ENCODE measurements at regions of chr4 and their contacts with region 1.

Region 1: DNA sequence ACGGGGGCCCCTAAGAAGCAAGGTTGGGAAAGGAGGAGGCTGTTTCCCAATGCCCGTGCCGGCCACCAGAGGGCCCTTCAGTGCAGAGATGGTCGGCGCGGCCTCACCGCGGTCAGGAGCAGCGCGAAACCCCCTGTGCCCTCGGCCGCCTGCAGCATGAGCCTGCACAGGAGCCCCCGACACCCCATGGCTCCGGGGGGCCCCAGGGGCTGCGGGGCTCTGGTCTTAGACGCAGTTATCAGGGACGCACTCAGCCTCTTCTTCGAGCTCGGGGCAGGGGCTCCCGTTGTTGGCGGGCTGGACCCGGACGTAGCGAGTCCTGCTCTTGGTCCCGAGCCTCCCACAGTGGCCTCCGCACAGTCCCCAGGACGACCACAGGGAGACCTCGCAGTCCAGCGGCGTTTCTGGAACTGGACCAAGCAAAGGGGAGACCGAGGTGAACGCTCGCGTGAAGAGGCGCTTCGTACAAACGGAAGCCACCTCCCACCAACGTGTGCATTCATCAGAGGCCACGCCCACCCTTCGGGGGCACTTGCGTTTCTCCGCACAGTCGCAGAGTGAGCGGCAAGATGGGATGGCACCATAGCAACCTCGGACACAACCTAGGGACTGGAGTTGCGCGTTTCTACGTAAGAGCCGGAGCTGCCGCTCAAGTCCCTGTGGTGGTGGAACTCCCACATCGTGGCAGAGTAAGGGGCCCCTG is 5.0 kb downstream of the SPON2 start:
- DNase-seq: peak; percentile 72
- H3K4me3 ChIP-seq: peak overlapping the region; percentile 17 to 36 (median 32)
- H3K27ac ChIP-seq: no peak overlapping the region
- H3K4me1 ChIP-seq: peaks cover 3% of the 10 kb centered on the region
- H3K27me3 ChIP-seq: peaks cover 23% of the 10 kb centered on the region in 2 experiments
- CTCF ChIP-seq: peak; percentile 90 to 98
- POLR2A ChIP-seq: no peak

Region 2: GRCh38 chr4:1249148-1249730 is 81.8 kb after region 1 on chr4:
- CTCF ChIA-PET with region 1: interaction called, 4 read pairs
- POLR2A ChIA-PET with region 1: no interaction called
- dilution Hi-C with region 1: no loop called
- intact Hi-C with region 1: loop called (anchors 1 kb)
- DNase-seq: peak; percentile 75
- H3K4me3 ChIP-seq: peak overlapping the region; percentile 56 to 63 (median 58)
- H3K27ac ChIP-seq: peak overlapping the region; percentile 77
- H3K4me1 ChIP-seq: peaks cover 18% of the 10 kb centered on the region
- H3K27me3 ChIP-seq: no peaks in the 10 kb centered on the region
- CTCF ChIP-seq: no peak
- POLR2A ChIP-seq: peak; percentile 62

Region 3: GRCh38 chr4:1266881-1267763 is 99.7 kb after region 1 on chr4:
- CTCF ChIA-PET with region 1: interaction called, 52 read pairs
- POLR2A ChIA-PET with region 1: no interaction called
- dilution Hi-C with region 1: no loop called
- intact Hi-C with region 1: loop called (anchors 1 kb)
- DNase-seq: no peak
- H3K4me3 ChIP-seq: no peak overlapping the region
- H3K27ac ChIP-seq: no peak overlapping the region
- H3K4me1 ChIP-seq: no peaks in the 10 kb centered on the region
- H3K27me3 ChIP-seq: no peaks in the 10 kb centered on the region
- CTCF ChIP-seq: no peak
- POLR2A ChIP-seq: no peak

Region 4: GRCh38 chr4:1289207-1290164 is 122.1 kb after region 1 on chr4 and contains the start of gene MAEA:
- CTCF ChIA-PET with region 1: no interaction called
- POLR2A ChIA-PET with region 1: no interaction called
- dilution Hi-C with region 1: no loop called
- intact Hi-C with region 1: loop called (anchors 1 kb)
- DNase-seq: peak; percentile 98
- H3K4me3 ChIP-seq: peak within 1 kb of the TSS; percentile 84 to 87 (median 86)
- H3K27ac ChIP-seq: peak within 1 kb of the TSS; percentile 67
- H3K4me1 ChIP-seq: peaks cover 16% of the 10 kb centered on the region
- H3K27me3 ChIP-seq: no peaks in the 10 kb centered on the region
- CTCF ChIP-seq: no peak
- POLR2A ChIP-seq: peak; percentile 96
- total RNA-seq, gene MAEA: 66.0 and 66.6 TPM in 2 replicates

Region 5: DNA sequence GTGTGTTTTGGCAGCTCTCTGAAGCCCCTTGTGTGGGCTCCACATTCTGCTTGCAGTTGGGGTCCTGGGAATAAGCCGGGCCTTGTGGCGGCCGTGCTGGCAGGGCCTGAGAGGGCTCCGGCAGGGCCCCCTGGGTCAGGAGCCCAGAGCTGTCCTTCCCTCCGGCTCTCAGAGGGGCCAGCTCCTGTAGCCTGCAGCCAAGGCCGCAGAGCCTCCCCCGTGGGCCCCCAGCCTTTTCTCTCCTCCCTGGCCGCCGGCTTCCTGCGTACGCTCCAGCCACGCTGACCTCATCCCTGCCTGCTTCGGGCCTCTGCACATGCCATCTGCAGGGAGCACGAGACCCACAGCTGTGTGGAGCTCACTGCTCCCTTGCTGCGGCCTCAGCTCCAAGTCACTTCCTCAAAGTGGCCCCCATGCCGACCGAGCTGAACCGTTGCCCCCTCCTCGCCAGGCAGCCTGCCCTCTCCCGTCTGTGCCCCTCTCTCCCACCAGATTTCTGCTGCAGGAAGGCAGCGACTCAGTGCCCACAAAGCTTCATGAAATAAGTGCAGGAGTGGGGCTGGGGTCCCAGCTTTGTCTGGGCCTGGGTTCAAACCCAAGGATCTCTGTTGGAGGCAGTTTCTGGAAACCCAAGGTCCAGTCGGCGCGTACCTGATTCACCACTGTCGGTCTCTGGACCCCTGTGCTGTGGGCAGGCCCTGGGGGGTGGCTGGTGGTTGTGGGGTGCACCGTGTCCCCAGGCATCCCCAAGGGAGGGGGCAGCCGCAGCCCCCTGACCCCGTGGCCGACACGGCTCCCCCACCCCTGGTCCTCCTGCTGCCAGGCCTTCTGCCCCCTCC is 295.9 kb after region 1 on chr4:
- CTCF ChIA-PET with region 1: no interaction called
- POLR2A ChIA-PET with region 1: no interaction called
- dilution Hi-C with region 1: no loop called
- intact Hi-C with region 1: no loop called
- DNase-seq: no peak
- H3K4me3 ChIP-seq: no peak overlapping the region
- H3K27ac ChIP-seq: no peak overlapping the region
- H3K4me1 ChIP-seq: no peaks in the 10 kb centered on the region
- H3K27me3 ChIP-seq: peaks cover 7 to 12% of the 10 kb centered on the region in 2 experiments
- CTCF ChIP-seq: no peak
- POLR2A ChIP-seq: no peak

Region 6: DNA sequence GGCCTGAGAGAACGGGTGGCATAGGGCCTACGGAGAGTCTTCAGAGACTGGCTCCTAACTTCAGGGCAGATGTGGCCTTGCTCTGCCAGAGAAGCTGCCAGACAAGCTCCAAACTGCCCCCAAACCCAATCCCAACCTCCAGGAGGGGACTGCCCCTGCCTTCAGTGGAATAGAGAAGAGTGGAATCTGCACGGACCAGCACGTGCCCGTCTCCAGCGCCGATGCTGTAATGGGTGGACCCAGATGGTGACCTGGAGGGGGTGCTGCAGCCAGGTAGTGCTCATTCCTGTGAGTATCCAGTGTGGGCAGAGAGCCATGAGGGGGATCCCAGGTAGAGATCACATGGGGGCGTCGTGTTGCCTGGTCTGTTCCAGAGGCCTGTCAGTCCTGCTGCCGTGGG is 312.1 kb after region 1 on chr4:
- CTCF ChIA-PET with region 1: no interaction called
- POLR2A ChIA-PET with region 1: no interaction called
- dilution Hi-C with region 1: no loop called
- intact Hi-C with region 1: no loop called
- DNase-seq: no peak
- H3K4me3 ChIP-seq: no peak overlapping the region
- H3K27ac ChIP-seq: no peak overlapping the region
- H3K4me1 ChIP-seq: no peaks in the 10 kb centered on the region
- H3K27me3 ChIP-seq: no peaks in the 10 kb centered on the region
- CTCF ChIP-seq: no peak
- POLR2A ChIP-seq: no peak

Region 7: GRCh38 chr4:1628892-1629698 is 461.7 kb after region 1 on chr4:
- CTCF ChIA-PET with region 1: no interaction called
- POLR2A ChIA-PET with region 1: no interaction called
- dilution Hi-C with region 1: no loop called
- intact Hi-C with region 1: loop called (anchors 1 kb)
- DNase-seq: peak; percentile 22
- H3K4me3 ChIP-seq: no peak overlapping the region
- H3K27ac ChIP-seq: no peak overlapping the region
- H3K4me1 ChIP-seq: no peaks in the 10 kb centered on the region
- H3K27me3 ChIP-seq: no peaks in the 10 kb centered on the region
- CTCF ChIP-seq: peak; percentile 97 to 99
- POLR2A ChIP-seq: no peak